ENCODE measurements at regions of chr18 and their contacts with region 1.

Region 1: DNA sequence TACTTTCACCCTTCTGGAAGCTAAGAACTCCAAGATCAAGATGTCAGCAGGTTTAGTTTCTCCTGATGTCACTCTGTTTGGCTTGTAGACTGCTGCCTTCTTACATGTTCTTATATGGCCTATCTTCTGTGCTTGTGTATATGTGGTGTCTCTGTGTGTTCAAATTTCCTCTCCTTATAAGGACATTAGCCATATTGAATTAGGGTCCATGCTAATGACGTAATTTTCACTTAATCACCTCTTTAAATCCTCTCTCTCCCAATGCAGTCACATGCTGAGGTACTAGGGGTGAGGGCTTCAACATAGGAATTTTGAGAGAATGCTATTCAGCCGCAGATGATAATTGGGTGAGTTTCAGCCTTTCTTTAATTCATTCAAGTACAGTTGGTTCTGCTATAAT is 458.3 kb upstream of the SYT4 start:
- DNase-seq: no peak
- ATAC-seq: no peak
- H3K4me3 ChIP-seq: no peak overlapping the region
- H3K4me3 Mint-ChIP-seq: no peak overlapping the region
- H3K27ac ChIP-seq: no peak overlapping the region
- H3K27ac Mint-ChIP-seq: no peak overlapping the region
- H3K4me1 ChIP-seq: no peaks in the 10 kb centered on the region
- H3K4me1 Mint-ChIP-seq: no peaks in the 10 kb centered on the region
- H3K27me3 ChIP-seq: no peaks in the 10 kb centered on the region
- H3K27me3 Mint-ChIP-seq: no peaks in the 10 kb centered on the region

Region 2: DNA sequence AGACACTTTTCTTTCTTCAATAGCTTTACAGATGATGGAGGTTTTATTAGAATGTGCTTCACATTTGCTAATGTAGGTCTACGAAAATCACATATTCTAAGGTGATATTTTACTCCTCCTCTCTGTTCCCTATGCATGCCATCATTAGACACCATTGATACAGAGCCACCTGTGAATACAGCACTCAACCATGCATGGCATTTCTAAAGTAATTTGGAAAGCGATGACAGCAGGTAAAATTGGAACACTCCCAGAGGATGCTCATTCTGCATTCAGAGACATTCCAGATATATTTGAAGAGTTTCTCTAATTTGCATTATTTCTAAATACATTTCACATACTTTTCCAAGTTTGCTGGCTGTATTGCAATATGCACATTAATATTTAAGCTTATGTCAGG is 554.8 kb before region 1 on chr18:
- CTCF ChIA-PET with region 1: no interaction called
- POLR2A ChIA-PET with region 1: no interaction called
- intact Hi-C with region 1: no loop called
- DNase-seq: no peak
- ATAC-seq: no peak
- H3K4me3 ChIP-seq: no peak overlapping the region
- H3K4me3 Mint-ChIP-seq: no peak overlapping the region
- H3K27ac ChIP-seq: no peak overlapping the region
- H3K27ac Mint-ChIP-seq: no peak overlapping the region
- H3K4me1 ChIP-seq: no peaks in the 10 kb centered on the region
- H3K4me1 Mint-ChIP-seq: no peaks in the 10 kb centered on the region
- H3K27me3 ChIP-seq: no peaks in the 10 kb centered on the region
- H3K27me3 Mint-ChIP-seq: no peaks in the 10 kb centered on the region

Region 3: DNA sequence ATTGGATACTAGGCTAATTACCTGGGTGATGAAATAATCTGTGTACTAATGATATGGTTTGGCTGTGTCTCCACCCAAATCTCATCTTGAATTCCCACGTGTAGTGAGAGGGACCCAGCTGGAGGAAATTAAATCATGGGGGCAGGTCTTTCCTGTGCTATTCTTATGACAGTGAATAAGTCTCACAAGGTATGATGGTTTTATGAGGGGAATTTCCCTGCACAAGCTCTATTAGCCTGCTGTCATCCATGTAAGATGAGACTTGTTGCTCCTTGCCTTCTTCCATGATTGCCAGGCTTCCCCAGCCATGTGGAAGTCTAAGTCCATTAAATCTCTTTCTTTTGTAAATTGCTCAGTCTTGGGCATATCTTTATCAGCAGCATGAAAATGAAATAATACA is 64.1 kb before region 1 on chr18:
- CTCF ChIA-PET with region 1: no interaction called
- POLR2A ChIA-PET with region 1: no interaction called
- intact Hi-C with region 1: loop called in 1 of 2 experiments (anchors 10 kb)
- DNase-seq: no peak
- ATAC-seq: no peak
- H3K4me3 ChIP-seq: no peak overlapping the region
- H3K4me3 Mint-ChIP-seq: no peak overlapping the region
- H3K27ac ChIP-seq: no peak overlapping the region
- H3K27ac Mint-ChIP-seq: no peak overlapping the region
- H3K4me1 ChIP-seq: no peaks in the 10 kb centered on the region
- H3K4me1 Mint-ChIP-seq: no peaks in the 10 kb centered on the region
- H3K27me3 ChIP-seq: no peaks in the 10 kb centered on the region
- H3K27me3 Mint-ChIP-seq: no peaks in the 10 kb centered on the region

Region 4: DNA sequence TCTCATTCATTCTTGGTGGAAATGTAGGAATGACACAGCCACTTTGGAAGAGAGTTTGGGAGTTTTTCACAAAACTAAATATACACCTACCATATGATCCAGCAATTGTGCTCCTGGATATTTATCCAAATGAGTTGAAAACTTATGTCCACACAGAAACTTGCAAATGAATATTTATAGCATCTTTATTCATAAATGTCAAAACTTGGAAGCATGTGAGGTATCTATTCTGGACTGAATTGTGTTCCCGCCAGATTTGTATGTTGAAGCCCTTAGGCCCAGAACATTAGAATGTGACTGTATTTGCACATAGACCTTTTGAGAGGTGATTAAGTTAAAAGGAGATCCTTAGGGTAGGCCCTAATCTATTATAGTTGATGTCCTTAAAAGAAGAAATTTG is 48.9 kb before region 1 on chr18:
- CTCF ChIA-PET with region 1: no interaction called
- POLR2A ChIA-PET with region 1: no interaction called
- intact Hi-C with region 1: no loop called
- DNase-seq: no peak
- ATAC-seq: no peak
- H3K4me3 ChIP-seq: no peak overlapping the region
- H3K4me3 Mint-ChIP-seq: no peak overlapping the region
- H3K27ac ChIP-seq: no peak overlapping the region
- H3K27ac Mint-ChIP-seq: no peak overlapping the region
- H3K4me1 ChIP-seq: no peaks in the 10 kb centered on the region
- H3K4me1 Mint-ChIP-seq: peaks cover 0 to 5% (median 0%) of the 10 kb centered on the region in 7 donors
- H3K27me3 ChIP-seq: no peaks in the 10 kb centered on the region
- H3K27me3 Mint-ChIP-seq: no peaks in the 10 kb centered on the region

Region 5: DNA sequence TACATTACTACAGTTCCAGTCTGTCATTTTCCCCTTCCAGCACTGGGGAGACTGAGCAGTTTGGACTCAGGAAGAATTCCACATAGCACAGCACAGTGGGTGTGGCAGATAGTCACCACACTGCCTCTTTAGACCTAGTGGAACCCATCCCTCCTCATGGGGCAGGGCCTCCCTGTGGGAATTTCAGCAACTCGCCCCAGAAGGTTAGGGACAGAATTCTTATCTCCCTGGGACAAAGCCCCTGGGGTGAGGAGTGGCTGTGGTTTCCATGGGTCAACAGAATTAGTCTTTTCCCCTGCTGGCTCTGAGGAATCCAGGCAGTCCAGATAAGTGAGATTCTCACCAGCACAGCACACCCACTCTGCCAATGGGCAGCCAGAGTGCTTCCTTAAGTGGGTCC is 16.2 kb before region 1 on chr18:
- CTCF ChIA-PET with region 1: no interaction called
- POLR2A ChIA-PET with region 1: no interaction called
- intact Hi-C with region 1: no loop called
- DNase-seq: no peak
- ATAC-seq: no peak
- H3K4me3 ChIP-seq: no peak overlapping the region
- H3K4me3 Mint-ChIP-seq: no peak overlapping the region
- H3K27ac ChIP-seq: no peak overlapping the region
- H3K27ac Mint-ChIP-seq: no peak overlapping the region
- H3K4me1 ChIP-seq: no peaks in the 10 kb centered on the region
- H3K4me1 Mint-ChIP-seq: no peaks in the 10 kb centered on the region
- H3K27me3 ChIP-seq: no peaks in the 10 kb centered on the region
- H3K27me3 Mint-ChIP-seq: no peaks in the 10 kb centered on the region

Measured in naive thymus-derived CD4-positive, alpha-beta T cell (primary cell).